Cardiac septum (tissue), 1 donor: ENCODE measurements at regions of chr11 and their contacts with region 1.

Region 1: DNA sequence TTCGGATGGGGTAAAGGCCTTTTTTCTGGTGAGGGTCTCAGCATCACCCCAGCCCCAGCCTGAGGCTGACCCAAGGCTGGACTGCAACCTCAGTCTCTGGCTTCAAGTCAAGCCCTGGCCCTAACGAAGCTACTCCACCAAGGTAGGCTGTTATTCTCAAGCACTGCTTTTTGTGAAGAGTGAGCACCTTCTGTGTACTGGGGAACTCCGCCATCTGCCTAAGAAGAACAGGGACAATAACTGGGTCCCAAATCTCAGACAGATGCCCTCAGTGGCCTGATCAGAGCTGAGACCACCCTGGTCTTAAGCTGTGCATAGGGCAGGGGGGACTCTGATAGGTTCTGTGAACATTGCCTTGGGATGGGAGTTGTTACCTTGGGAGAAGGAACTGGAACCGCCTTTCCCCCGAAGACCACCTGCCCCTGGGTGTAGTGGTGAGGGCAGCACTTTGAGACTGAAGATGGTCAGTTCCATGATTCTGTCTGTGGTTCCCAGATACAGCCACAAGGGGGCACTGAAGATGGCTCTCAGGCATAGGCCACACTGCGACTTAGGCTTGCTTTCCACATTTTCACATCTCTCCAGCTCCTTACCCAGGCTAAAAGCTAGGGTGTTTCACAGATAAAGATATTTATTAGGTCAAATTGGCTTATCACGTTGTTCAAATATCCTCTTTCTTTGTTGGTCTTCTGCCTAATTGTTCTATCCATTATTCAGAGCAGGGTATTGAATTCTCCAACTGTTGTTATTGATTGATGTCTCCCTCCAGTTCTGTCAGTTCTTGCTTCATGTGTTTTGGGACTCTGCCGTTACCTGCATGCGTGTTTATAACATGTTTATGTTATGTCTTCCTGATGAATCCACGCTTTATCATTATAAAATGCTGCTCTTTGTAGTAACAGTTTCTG is 11.8 kb upstream of the UVRAG start:
- DNase-seq: peak; percentile 85

Region 2: GRCh38 chr11:75717608-75718418 is 85.4 kb before region 1 on chr11 and contains the start of gene MOGAT2:
- intact Hi-C with region 1: no loop called
- DNase-seq: no peak
- total RNA-seq, gene MOGAT2: not detected

Region 3: GRCh38 chr11:76152086-76152681 is 349.0 kb after region 1 on chr11:
- intact Hi-C with region 1: loop called (anchors 10 kb)
- DNase-seq: peak; percentile 92

Region 4: DNA sequence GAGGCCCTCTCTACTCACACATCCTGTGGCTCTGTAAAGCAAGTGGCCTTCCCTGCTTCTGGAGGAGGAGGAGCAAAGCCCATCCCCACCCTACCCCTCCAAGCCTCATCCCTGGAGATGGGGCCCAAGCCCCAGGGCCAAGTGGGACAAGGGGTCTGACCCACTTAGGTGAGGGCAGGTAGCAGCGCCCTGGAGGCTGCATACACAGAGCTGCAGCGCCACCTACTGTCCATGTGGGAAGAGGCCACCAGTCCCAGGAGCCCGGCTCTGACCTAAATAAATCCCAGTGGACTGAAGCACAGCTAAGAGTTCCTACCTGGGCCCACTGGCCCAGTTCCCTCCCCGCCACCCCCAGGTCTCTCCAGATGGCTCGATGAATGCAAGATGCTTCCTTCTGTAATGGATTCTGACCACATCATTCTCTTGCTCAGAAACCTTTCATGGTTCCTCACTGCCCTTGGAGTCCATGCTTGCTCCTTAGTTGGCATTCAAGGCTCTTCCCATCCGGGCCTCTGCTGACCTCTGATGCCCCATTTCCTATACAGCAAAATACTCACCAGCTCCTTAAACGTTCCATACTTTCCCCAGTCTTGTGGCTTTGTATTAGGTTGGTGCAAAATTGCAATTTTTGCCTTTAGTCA is 515.7 kb after region 1 on chr11:
- intact Hi-C with region 1: loop called (anchors 10 kb)
- DNase-seq: peak; percentile 90